Adrenal gland (tissue), 19 donors: ENCODE measurements at regions of chr22 and their contacts with region 1.

Region 1: DNA sequence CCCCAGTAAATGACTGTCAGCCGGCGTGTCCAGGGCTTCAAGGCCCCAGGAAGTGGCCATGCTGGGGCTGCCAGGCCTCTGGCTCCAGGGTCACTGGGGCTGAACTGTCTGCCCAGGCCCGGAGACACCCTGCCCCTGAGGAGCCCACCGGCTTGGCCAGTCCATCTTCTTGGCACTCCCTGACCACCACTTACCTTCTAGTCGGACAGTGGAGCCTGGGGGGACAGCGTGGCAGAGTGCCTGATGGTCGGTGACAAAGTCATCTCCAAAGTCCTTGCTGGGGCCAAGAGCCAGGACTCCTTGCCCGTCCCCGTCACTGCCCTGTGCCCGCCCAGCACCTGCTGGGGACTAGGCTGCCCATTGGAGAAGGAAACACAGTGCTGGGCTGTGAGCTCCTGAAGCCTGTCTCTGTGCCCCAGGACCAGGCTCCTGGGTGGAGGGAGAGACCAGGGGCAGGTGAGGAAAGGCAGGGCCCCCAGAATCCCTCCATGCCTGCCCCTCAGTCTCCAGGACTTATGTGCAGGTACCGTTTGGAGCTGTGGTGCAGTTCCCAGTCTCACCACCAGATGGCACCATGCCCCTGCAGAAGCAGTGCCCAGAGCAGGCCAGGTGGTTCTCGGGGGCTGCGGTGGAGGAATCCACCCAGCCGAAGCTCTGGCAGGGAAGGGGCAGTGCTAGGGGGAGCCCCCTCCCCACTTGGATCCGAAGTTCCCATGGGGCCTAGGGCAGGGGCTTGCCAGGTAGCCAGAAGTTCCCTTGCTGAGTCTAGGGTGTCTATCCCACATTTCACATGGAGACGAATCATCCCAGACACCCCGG is 6.0 kb upstream of the CCDC188 start:
- DNase-seq: peak; percentile 69 to 96 (median 90)
- H3K4me3 ChIP-seq: no peak overlapping the region
- H3K27ac ChIP-seq: peak overlapping the region in 2 of 5 donors; percentile 57 to 74
- H3K4me1 ChIP-seq: peaks cover 0 to 7% of the 10 kb centered on the region in 2 donors
- H3K27me3 ChIP-seq: no peaks in the 10 kb centered on the region
- CTCF ChIP-seq: peak; percentile 99 to 100 (median 100)
- POLR2A ChIP-seq: no peak

Region 2: GRCh38 chr22:20000169-20000621 is 156.6 kb before region 1 on chr22:
- intact Hi-C with region 1: no loop called
- DNase-seq: no peak
- H3K4me3 ChIP-seq: no peak overlapping the region
- H3K27ac ChIP-seq: no peak overlapping the region
- H3K4me1 ChIP-seq: peaks cover 0 to 14% of the 10 kb centered on the region in 2 donors
- H3K27me3 ChIP-seq: no peaks in the 10 kb centered on the region
- CTCF ChIP-seq: no peak
- POLR2A ChIP-seq: no peak

Region 3: DNA sequence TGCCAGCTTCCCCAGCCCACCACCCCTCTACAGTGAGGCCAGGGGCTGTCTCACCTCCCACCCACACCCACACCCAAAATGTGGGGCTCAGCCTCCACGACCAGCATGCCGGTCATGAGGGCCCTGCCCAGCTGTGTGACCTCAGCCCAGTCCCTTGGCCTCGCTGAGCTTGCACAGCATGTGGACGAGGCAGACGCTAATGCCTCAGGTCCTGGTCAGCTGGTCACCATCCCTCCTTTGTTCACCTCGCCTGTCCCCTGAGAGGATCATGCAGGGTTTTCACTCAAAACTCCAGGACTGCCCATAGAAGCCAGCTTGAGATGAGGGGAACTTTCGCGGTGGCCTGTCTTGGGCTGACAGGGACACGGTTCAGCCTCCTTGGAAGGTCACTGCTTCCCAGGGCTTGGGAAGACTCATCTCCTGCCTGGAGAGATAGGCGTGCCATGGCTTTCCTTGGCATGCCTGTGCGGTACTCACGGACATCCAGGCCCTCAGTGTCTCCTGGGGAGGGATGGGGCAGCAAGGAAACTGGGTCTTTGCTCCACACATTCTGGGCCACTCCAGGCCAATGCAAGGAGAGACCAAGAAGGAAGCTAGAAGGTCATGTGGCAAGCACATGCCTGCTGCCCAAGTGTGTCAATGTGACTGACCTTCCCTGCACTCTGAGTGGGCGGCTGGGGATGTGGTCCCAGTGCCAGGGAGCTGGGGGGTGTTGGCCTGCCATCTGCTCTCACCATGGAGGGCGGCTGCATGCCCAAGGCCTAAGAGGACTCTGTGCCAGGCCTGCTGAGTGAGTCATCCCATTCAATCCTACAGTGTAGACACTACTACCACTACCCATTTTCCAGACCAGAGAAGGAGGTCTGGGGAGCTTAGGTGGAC is 114.5 kb after region 1 on chr22:
- intact Hi-C with region 1: loop called in 1 of 2 experiments (anchors 5 kb)
- DNase-seq: peak; percentile 59 to 91 (median 71)
- H3K4me3 ChIP-seq: no peak overlapping the region
- H3K27ac ChIP-seq: peak overlapping the region in 1 of 5 donors; percentile 29
- H3K4me1 ChIP-seq: peaks cover 7 to 8% of the 10 kb centered on the region in 2 donors
- H3K27me3 ChIP-seq: no peaks in the 10 kb centered on the region
- CTCF ChIP-seq: no peak
- POLR2A ChIP-seq: no peak

Region 4: GRCh38 chr22:20283674-20284066 is 126.8 kb after region 1 on chr22:
- intact Hi-C with region 1: loop called in 1 of 2 experiments (anchors 2 kb)
- DNase-seq: no peak
- H3K4me3 ChIP-seq: no peak overlapping the region
- H3K27ac ChIP-seq: no peak overlapping the region
- H3K4me1 ChIP-seq: no peaks in the 10 kb centered on the region
- H3K27me3 ChIP-seq: no peaks in the 10 kb centered on the region
- CTCF ChIP-seq: no peak
- POLR2A ChIP-seq: no peak